ENCODE measurements at regions of chr16 and their contacts with region 1.

Region 1: GRCh38 chr16:71808593-71809459 is at the start of gene AP1G1:
- DNase-seq: peak; percentile 84 to 99 (median 90)
- ATAC-seq: peak; percentile 87
- H3K4me3 ChIP-seq: peak within 1 kb of the TSS; percentile 91
- H3K4me3 Mint-ChIP-seq: peak within 1 kb of the TSS; percentile 100
- H3K27ac ChIP-seq: peak within 1 kb of the TSS; percentile 98 to 99
- H3K27ac Mint-ChIP-seq: peak within 1 kb of the TSS; percentile 100
- H3K4me1 ChIP-seq: peaks cover 43% of the 10 kb centered on the region
- H3K4me1 Mint-ChIP-seq: peaks cover 47% of the 10 kb centered on the region
- H3K27me3 ChIP-seq: no peaks in the 10 kb centered on the region
- H3K27me3 Mint-ChIP-seq: no peaks in the 10 kb centered on the region
- CTCF ChIP-seq: no peak
- total RNA-seq, gene AP1G1: 171 to 175 TPM

Region 2: GRCh38 chr16:71288890-71289733 is 519.7 kb before region 1 on chr16 and contains the start of gene CMTR2:
- CTCF ChIA-PET with region 1: no interaction called
- POLR2A ChIA-PET with region 1: no interaction called
- intact Hi-C with region 1: no loop called
- DNase-seq: peak; percentile 71 to 95 (median 83)
- ATAC-seq: peak; percentile 92
- H3K4me3 ChIP-seq: peak within 1 kb of the TSS; percentile 94
- H3K4me3 Mint-ChIP-seq: peak within 1 kb of the TSS; percentile 91
- H3K27ac ChIP-seq: peak within 1 kb of the TSS; percentile 80 to 90
- H3K27ac Mint-ChIP-seq: peak within 1 kb of the TSS; percentile 81
- H3K4me1 ChIP-seq: peaks cover 19% of the 10 kb centered on the region
- H3K4me1 Mint-ChIP-seq: peaks cover 31% of the 10 kb centered on the region
- H3K27me3 ChIP-seq: peaks cover 5 to 17% of the 10 kb centered on the region in 2 experiments
- H3K27me3 Mint-ChIP-seq: peaks cover 26% of the 10 kb centered on the region
- CTCF ChIP-seq: no peak
- total RNA-seq, gene CMTR2: 5.9 to 6.6 TPM

Region 3: GRCh38 chr16:71734511-71734910 is 74.3 kb before region 1 on chr16:
- CTCF ChIA-PET with region 1: no interaction called
- POLR2A ChIA-PET with region 1: no interaction called
- intact Hi-C with region 1: no loop called
- DNase-seq: no peak
- ATAC-seq: no peak
- H3K4me3 ChIP-seq: no peak overlapping the region
- H3K4me3 Mint-ChIP-seq: no peak overlapping the region
- H3K27ac ChIP-seq: no peak overlapping the region
- H3K27ac Mint-ChIP-seq: no peak overlapping the region
- H3K4me1 ChIP-seq: no peaks in the 10 kb centered on the region
- H3K4me1 Mint-ChIP-seq: no peaks in the 10 kb centered on the region
- H3K27me3 ChIP-seq: no peaks in the 10 kb centered on the region
- H3K27me3 Mint-ChIP-seq: no peaks in the 10 kb centered on the region
- CTCF ChIP-seq: no peak

Region 4: GRCh38 chr16:71794943-71795342 is 13.9 kb before region 1 on chr16:
- CTCF ChIA-PET with region 1: no interaction called
- POLR2A ChIA-PET with region 1: interaction called, 13 read pairs
- intact Hi-C with region 1: no loop called
- DNase-seq: no peak
- ATAC-seq: no peak
- H3K4me3 ChIP-seq: no peak overlapping the region
- H3K4me3 Mint-ChIP-seq: peak overlapping the region; percentile 9
- H3K27ac ChIP-seq: no peak overlapping the region
- H3K27ac Mint-ChIP-seq: no peak overlapping the region
- H3K4me1 ChIP-seq: peaks cover 45% of the 10 kb centered on the region
- H3K4me1 Mint-ChIP-seq: peaks cover 66% of the 10 kb centered on the region
- H3K27me3 ChIP-seq: no peaks in the 10 kb centered on the region
- H3K27me3 Mint-ChIP-seq: no peaks in the 10 kb centered on the region
- CTCF ChIP-seq: no peak

Region 5: DNA sequence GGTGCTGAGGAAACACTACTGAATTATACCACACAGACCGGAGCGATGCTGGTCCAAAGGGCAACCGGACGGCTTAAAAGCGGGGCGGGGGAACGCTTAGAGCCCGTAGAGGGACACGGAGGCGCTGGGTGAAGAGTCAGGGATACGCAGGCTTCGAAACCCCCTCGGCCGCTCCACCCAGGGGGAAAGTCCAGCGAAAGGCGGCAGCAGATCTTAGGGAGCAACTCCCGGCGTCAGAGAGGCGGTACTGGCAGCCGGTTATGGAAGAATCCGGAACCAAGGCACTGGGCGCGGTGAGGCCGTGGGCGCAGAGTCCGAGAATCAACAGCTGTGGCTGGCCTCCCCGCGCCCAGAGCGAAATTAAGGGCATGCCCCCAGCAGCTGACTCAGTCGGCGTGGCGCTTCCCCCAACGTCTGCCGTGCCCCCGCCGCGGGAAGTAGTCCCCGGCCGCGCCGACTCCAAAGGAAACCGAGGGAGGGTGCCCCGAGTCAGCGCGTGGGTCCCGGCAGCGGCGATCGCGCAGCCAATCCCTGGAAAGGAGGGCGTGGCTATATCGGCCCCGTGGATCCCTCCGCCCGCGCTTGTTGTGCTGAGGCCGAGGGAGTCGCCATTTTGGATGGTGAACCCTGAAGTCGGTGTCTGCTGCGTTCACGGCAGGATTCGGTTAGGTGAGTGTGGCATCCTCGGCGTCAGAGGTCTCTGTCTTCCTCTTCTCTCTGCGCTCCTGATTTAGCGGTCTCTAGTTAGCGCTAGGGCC is 86.3 kb after region 1 on chr16 and contains the start of gene IST1:
- CTCF ChIA-PET with region 1: no interaction called
- POLR2A ChIA-PET with region 1: interaction called, 89 read pairs
- intact Hi-C with region 1: loop called (anchors 1 to 2 kb)
- DNase-seq: peak; percentile 95 to 99 (median 98)
- ATAC-seq: peak; percentile 91
- H3K4me3 ChIP-seq: peak within 1 kb of the TSS; percentile 98
- H3K4me3 Mint-ChIP-seq: peak within 1 kb of the TSS; percentile 99
- H3K27ac ChIP-seq: peak within 1 kb of the TSS; percentile 94 to 95
- H3K27ac Mint-ChIP-seq: peak within 1 kb of the TSS; percentile 98
- H3K4me1 ChIP-seq: peaks cover 44% of the 10 kb centered on the region
- H3K4me1 Mint-ChIP-seq: peaks cover 36% of the 10 kb centered on the region
- H3K27me3 ChIP-seq: no peaks in the 10 kb centered on the region
- H3K27me3 Mint-ChIP-seq: no peaks in the 10 kb centered on the region
- CTCF ChIP-seq: no peak
- total RNA-seq, gene IST1: 411 to 412 TPM

Region 6: DNA sequence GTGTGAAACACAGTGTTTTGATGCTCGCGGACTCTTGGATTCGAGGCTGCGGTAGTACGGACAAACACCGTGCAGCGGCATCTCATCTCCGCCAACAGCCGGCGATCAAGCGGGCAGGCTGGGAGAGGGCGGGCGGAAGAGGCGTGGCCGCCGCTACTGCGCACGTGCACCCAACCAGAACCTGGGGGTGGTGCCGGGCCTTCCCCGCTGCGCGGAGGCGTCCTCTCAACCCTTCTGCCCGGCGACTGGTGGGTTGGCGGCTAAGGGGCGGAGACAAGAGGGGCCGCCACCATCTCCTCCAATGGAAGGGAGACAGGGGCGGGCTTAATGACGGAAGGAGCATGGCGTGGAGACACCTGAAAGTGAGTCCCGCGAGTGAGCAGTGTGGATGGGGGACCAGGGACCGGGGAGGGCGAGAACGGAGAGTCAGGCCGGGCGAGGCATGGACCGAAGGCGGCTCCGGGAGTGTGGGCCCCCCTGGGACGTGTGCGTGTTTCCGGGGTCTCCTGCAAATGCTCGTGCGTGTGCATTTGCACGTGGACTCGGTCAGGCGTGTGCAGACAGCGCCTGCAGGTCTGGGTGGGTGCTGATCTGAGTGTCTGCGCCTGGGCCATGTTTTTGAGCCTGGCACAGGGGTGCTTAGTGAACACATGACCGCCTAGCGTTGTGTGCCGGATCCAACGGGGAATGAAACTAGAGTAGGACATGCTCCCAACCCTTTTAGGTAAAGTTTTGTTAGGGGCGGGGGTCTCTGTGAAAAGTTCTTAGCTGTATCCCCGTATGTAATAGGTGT is 199.8 kb after region 1 on chr16 and contains the start of gene DHODH:
- CTCF ChIA-PET with region 1: no interaction called
- POLR2A ChIA-PET with region 1: no interaction called
- intact Hi-C with region 1: loop called (anchors 2 to 5 kb)
- DNase-seq: peak; percentile 94 to 99 (median 97)
- ATAC-seq: peak; percentile 99
- H3K4me3 ChIP-seq: peak within 1 kb of the TSS; percentile 99
- H3K4me3 Mint-ChIP-seq: peak within 1 kb of the TSS; percentile 96
- H3K27ac ChIP-seq: peak within 1 kb of the TSS; percentile 29 to 58
- H3K27ac Mint-ChIP-seq: peak within 1 kb of the TSS; percentile 73
- H3K4me1 ChIP-seq: peaks cover 19% of the 10 kb centered on the region
- H3K4me1 Mint-ChIP-seq: peaks cover 12% of the 10 kb centered on the region
- H3K27me3 ChIP-seq: no peaks in the 10 kb centered on the region
- H3K27me3 Mint-ChIP-seq: no peaks in the 10 kb centered on the region
- CTCF ChIP-seq: no peak
- total RNA-seq, gene DHODH: 2.5 to 2.7 TPM

Measured in CD4-positive, alpha-beta T cell (primary cell).